ENCODE measurements at regions of chr9 and their contacts with region 1.

Region 1: DNA sequence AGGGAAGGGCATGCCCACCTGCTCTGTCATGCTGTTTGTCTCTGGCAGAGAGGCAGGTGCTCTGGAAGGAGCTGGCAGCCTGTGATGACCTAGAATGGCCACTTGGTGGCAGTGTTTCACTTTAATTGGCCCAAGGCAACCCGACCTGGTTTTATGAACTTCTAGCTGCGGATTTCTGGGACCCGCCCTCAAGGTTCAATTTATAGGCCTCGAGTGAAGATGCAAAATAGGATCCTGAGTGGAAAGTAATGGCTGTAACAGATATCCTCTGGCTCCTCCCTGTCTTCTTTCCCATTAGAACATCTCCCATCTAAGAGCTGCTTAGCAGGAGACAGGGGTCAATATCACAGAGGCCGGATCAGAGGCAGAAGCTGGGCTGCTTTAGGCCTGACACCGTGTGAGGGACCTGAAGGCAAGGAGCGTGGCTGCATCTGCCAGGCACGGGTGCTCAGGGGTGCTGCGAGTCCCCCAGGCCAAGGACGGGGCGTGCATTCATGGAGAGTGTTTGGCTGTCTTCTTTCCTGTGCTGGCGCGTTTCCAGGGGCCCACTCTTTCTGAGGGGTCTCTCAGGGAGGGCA is 56.7 kb upstream of the SLC28A3 start:
- DNase-seq: peak; percentile 63 to 78
- H3K4me3 ChIP-seq: no peak overlapping the region
- H3K4me1 ChIP-seq: no peaks in the 10 kb centered on the region
- H3K27me3 ChIP-seq: peaks cover 9% of the 10 kb centered on the region

Region 2: GRCh38 chr9:84111726-84112125 is 285.5 kb before region 1 on chr9:
- in situ Hi-C with region 1: no loop called
- DNase-seq: no peak
- H3K4me3 ChIP-seq: no peak overlapping the region
- H3K4me1 ChIP-seq: no peaks in the 10 kb centered on the region
- H3K27me3 ChIP-seq: peaks cover 3% of the 10 kb centered on the region; the same call in 1 of the 2 replicates

Region 3: GRCh38 chr9:84953797-84954705 is 556.8 kb after region 1 on chr9:
- in situ Hi-C with region 1: loop called (anchors 10 kb)
- DNase-seq: peak; percentile 61 to 84
- H3K4me3 ChIP-seq: no peak overlapping the region
- H3K4me1 ChIP-seq: no peaks in the 10 kb centered on the region
- H3K27me3 ChIP-seq: no peaks in the 10 kb centered on the region

Measured in HAP-1 (cell line).